Breast epithelium (tissue), 4 donors: ENCODE measurements at regions of chr11 and their contacts with region 1.

Region 1: DNA sequence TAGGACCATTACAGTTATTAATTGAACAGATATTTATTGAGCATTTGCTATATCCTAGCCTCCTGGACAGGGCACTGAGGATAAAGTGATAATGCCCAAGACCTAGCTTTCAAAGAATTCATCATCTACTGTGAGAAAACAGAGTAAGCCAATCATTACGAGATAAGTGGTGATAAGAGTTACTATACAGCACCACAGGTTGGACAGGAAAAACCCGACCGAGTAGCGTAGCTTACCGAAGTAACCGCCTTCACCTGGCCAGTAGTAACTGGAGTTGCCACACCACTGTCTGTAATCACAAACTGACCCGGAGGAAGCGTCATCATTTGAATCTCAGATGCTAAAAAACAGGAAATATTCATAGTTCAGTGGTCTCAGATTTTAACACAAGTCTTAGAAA is 10.0 kb upstream of the NFRKB start:
- DNase-seq: no peak
- H3K4me3 ChIP-seq: no peak overlapping the region
- H3K27ac ChIP-seq: no peak overlapping the region
- H3K4me1 ChIP-seq: no peaks in the 10 kb centered on the region
- H3K27me3 ChIP-seq: no peaks in the 10 kb centered on the region
- CTCF ChIP-seq: no peak
- POLR2A ChIP-seq: no peak

Region 2: GRCh38 chr11:129865701-129866100 is 39.7 kb before region 1 on chr11:
- intact Hi-C with region 1: no loop called
- DNase-seq: no peak
- H3K4me3 ChIP-seq: no peak overlapping the region
- H3K27ac ChIP-seq: peak overlapping the region in 1 of 2 donors; percentile 68
- H3K4me1 ChIP-seq: peaks cover 0 to 5% of the 10 kb centered on the region in 2 donors
- H3K27me3 ChIP-seq: no peaks in the 10 kb centered on the region
- CTCF ChIP-seq: no peak
- POLR2A ChIP-seq: no peak

Region 3: DNA sequence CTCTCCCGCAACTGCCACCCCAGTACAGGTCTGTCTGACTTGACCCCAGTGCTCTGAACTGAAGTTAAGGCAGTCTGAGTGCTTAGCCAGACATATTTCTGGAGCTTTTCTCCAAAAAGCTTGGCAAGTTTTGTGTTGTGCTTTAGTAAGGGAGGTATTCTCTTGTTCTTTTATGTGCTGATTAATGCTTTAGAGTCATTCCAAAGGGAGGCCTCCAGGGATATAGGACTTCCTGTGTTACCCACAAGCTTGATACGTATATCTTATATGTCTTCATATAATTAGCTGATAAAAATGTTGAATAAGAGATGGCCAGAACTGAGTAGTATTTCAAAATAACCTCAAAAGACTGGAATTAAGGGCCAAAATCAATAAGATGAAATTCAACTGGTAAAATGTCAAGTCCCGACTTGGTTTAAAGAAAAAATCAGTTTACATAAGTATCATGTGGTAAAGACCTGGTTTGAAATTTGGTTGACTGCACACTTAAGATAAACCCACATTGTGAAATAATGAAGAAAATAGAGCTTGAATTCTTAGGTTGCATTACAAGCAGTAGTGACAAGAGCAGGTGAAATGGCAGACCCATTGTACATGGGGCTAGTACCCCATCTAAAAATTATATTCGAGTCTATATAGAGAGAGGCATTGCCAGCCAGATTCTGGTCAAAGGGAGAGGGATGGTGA is 784.0 kb after region 1 on chr11:
- intact Hi-C with region 1: loop called (anchors 10 kb)
- DNase-seq: no peak
- H3K4me3 ChIP-seq: no peak overlapping the region
- H3K27ac ChIP-seq: no peak overlapping the region
- H3K4me1 ChIP-seq: no peaks in the 10 kb centered on the region
- H3K27me3 ChIP-seq: no peaks in the 10 kb centered on the region
- CTCF ChIP-seq: no peak
- POLR2A ChIP-seq: no peak